ENCODE measurements at regions of chr2 and their contacts with region 1.

Region 1: GRCh38 chr2:64675860-64676259 is 22.1 kb upstream of the SERTAD2 start:
- DNase-seq: no peak

Region 2: DNA sequence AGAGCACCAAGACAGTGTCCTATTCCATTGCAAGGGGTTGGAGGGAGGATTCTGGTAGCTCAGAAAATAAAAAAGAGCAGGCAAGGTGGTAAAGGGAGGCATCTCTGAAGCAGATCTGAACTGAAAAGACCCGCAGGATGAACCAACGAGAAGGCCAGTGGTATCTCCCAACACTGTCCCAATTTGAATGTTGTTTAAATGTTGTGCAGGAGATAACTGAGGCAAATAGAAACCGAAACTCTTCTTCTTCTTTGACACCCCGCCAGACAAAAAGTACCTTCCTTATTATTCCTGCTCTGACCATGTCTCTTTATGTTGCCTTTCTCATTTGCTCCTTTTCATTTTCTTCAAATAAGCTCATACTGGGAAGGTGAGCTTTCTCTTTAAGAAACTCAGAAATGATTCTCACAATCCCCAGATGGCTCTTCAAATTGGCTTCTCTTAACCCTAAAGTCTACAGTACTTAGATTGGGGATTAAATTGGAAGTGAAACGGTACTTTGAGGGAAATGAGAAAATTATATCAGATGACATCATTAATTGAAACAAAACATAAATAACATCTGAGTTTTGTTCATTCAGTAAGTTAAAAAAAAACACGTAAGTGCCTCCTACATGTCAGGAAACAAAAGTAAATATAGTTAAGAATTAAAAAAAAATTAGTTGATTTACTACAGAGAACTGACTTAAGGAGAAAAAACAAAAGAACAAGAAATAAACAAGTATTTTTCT is 1231.1 kb before region 1 on chr2:
- intact Hi-C with region 1: no loop called
- DNase-seq: no peak

Region 3: GRCh38 chr2:64730551-64731262 is 54.8 kb after region 1 on chr2:
- intact Hi-C with region 1: loop called in 1 of 2 experiments (anchors 10 kb)
- DNase-seq: no peak